KBM-7 (cell line): ENCODE measurements at regions of chr1 and their contacts with region 1.

Region 1: GRCh38 chr1:92601044-92601443 is 114.3 kb upstream of the GFI1 start:
- DNase-seq: no peak

Region 2: DNA sequence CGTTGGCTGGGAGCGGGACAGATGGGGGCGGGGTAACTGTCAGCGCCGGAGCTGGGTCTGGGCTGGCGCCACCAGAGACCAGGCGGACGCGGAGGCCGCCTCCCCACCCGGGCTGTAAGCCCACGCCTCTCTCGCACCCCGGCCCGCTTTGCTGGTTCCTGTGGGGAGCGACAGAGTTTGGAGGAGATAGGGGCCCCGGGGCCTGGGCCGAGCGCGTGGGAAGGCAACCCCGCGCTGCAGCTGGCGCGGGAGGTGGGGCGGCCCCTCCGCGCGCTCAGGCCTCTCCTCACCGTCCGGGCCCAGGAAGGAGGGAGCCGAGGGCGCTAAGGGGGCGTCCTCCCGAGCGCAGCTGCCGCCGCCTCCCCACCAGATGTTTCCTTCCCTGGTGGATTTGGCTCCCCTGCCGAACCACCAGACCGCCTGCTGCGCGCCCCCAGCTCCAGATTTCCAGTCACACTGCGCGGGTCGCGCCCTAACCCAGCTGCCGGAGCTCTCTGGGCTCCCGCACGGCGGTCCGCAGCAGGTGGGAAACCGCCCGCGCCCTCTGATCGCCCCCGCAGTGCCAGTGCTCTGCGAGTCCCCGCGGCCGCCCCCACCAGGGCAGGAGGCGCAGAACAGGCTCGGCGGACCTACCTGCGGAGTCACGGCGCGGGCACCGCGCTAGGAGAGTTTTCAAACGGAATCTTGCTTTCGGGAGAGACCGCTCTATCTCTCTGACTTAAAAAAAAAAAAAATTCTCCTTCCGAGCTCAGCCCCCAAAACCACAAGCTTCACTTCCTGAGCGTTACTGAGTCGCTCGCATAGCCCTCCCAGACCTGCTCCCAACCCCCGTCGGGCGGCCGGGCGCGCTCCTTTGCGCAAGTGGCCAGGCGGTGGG is 115.4 kb before region 1 on chr1:
- in situ Hi-C with region 1: loop called (anchors 10 kb)
- DNase-seq: peak; percentile 96

Region 3: GRCh38 chr1:92778376-92778775 is 177.3 kb after region 1 on chr1:
- in situ Hi-C with region 1: no loop called
- DNase-seq: no peak